ENCODE measurements at regions of chr10 and their contacts with region 1.

Region 1: DNA sequence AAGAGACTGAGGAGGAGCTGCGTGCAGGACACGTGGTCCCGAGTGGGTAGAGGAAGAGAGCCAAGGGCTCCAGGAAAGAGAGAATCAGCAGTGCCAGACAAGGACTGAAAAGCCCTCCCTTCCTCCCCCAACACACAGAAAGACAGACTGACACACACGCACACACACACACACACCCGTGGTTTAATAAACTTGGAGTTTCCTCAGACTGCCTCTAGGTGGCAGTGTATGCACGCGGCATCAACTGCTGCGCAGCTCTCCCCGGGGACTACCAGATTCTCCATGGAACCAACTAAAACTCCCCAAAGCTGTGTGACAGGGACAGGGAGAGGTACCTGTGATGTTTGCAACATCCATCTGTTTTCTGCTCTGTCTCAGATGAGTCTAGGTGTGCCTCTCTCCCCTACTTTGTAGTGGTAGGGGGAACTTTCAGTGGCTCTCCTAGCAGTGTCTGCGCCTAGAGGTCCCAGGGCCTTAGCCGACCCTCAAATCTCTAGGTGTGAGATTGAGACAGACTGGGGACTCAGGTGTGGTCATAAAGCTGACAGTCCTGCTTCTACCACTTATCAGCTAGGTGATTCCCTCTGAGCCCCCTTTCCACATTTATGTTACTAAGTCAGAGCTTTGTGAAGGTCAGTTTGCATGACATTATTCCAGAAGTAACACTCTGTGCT is 9.3 kb upstream of the TSPAN14 start:
- DNase-seq: peak; percentile 50
- ATAC-seq: peak; percentile 89
- H3K4me3 Mint-ChIP-seq: no peak overlapping the region
- H3K27ac Mint-ChIP-seq: no peak overlapping the region
- H3K4me1 Mint-ChIP-seq: peaks cover 19% of the 10 kb centered on the region
- H3K27me3 Mint-ChIP-seq: no peaks in the 10 kb centered on the region
- CTCF ChIP-seq: no peak

Region 2: DNA sequence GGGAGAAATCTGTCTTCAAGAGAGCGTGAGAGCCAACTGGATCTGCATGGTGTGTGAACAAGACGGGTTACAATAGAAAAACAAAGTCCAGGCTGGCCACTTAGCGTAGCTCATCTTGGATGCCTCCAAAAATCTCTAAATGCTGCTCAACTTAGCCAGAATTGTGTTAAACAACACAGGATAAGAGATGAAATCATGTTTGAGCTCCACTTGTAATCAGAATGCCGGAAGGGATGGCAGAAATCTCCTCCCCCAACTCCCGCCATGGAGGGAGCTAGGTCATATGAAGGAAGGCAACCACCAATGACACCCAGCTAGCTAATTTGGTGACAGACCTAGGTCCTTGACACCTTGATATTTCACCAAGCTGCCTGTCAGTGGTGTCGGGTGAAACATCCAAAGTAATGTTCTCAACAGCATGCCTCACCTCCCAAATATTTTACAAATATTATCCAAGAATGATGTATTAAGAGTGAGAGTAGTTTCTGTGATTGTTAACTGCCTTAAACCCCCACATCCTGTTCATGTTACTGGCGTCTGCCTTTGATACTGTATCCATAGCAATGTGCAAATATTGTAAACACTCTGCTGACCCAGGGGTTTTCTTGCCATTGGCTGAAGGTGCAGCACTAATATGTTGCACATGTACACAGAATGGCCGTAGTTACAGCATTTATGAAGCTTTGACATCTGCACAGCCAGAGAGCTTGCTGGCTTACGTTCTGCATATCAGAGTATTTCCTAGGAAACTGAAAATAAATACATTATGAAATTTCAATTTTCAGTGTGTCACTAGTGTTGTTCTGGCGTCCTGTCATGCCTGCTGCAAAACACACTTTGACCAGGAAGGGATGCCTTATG is 340.5 kb before region 1 on chr10:
- CTCF ChIA-PET with region 1: no interaction called
- POLR2A ChIA-PET with region 1: no interaction called
- DNase-seq: no peak
- ATAC-seq: no peak; the same call in 1 of the 2 replicates
- H3K4me3 Mint-ChIP-seq: no peak overlapping the region
- H3K27ac Mint-ChIP-seq: no peak overlapping the region
- H3K4me1 Mint-ChIP-seq: peaks cover 48% of the 10 kb centered on the region
- H3K27me3 Mint-ChIP-seq: peaks cover 6% of the 10 kb centered on the region
- CTCF ChIP-seq: no peak

Region 3: DNA sequence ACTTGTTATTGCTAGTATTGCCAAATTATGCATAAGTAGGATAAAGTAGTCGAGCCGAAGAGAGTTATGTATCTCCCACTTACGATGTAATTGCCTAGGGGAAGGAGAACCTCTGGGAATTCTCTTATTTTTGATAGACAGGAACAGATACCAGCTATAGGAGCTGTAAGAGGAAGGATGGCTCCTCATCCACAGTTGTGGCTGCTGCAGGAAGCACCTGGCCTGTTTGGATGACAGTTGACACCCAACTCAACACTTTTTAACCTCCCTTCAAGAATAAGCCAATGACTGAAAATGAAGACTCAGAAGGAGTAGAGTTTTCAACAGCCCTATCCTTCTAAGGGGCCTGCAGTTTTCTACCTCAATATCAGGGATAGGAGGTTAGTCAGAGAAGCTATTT is 94.5 kb before region 1 on chr10:
- CTCF ChIA-PET with region 1: no interaction called
- POLR2A ChIA-PET with region 1: no interaction called
- DNase-seq: no peak
- ATAC-seq: no peak
- H3K4me3 Mint-ChIP-seq: no peak overlapping the region
- H3K27ac Mint-ChIP-seq: no peak overlapping the region
- H3K4me1 Mint-ChIP-seq: peaks cover 16% of the 10 kb centered on the region
- H3K27me3 Mint-ChIP-seq: peaks cover 16% of the 10 kb centered on the region
- CTCF ChIP-seq: no peak

Region 4: GRCh38 chr10:80371460-80371859 is 73.3 kb before region 1 on chr10:
- CTCF ChIA-PET with region 1: no interaction called
- POLR2A ChIA-PET with region 1: no interaction called
- DNase-seq: no peak
- ATAC-seq: peak; percentile 66
- H3K4me3 Mint-ChIP-seq: no peak overlapping the region
- H3K27ac Mint-ChIP-seq: no peak overlapping the region
- H3K4me1 Mint-ChIP-seq: no peaks in the 10 kb centered on the region
- H3K27me3 Mint-ChIP-seq: peaks cover 3% of the 10 kb centered on the region; the same call in 1 of the 2 replicates
- CTCF ChIP-seq: no peak

Region 5: DNA sequence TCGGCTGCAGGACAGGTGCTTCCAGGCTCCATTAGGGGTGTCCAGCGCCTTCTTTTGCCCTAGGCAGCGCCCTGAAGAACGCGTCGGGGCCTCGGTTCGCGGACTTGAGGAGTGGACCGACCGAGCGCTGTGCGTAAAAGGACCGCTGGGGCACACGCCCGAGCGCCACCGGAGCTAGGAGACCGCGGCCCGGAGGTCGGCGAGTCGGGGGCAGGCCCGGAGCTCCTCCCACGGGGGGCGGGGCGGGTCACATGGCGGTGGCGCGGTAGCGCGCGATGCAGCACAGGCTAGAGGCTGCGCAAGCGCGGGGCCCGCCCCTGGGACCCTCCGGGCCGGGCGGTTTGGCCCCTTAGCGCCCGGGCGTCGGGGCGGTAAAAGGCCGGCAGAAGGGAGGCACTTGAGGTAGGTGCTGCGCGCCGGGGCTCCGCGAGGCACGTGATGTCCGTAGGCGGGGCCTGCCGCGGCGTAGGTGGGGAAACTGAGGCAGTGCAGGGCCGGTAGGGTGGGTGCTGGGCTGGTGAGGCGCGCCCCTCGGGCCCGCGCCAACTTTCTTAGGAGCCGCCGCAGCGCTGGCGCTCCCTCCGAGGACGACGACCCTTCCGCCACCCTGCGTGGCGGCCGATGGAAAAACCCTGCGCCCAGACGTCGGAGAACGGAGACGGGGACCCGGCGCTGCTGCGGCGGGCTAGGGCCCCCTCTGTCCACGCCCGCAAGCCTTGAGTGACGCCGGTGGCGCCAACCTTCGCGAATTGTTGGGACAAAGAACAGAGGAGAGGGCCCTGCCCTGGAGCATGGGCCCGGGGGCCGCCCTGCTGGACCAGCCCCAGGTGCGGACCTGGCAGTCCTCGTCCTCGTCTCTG is 36.3 kb before region 1 on chr10 and contains the start of gene PRXL2A:
- CTCF ChIA-PET with region 1: interaction called, 25 read pairs
- POLR2A ChIA-PET with region 1: interaction called, 4 read pairs
- DNase-seq: peak; percentile 94
- ATAC-seq: peak; percentile 95
- H3K4me3 Mint-ChIP-seq: peak within 1 kb of the TSS; percentile 88
- H3K27ac Mint-ChIP-seq: peak within 1 kb of the TSS; percentile 60
- H3K4me1 Mint-ChIP-seq: peaks cover 44% of the 10 kb centered on the region
- H3K27me3 Mint-ChIP-seq: peaks cover 26% of the 10 kb centered on the region
- CTCF ChIP-seq: no peak
- total RNA-seq, gene PRXL2A: 46.6 to 56.5 TPM (median 52.4 TPM) in 3 replicates

Region 6: GRCh38 chr10:80459047-80459931 is 14.5 kb after region 1 on chr10:
- CTCF ChIA-PET with region 1: interaction called, 32 read pairs
- POLR2A ChIA-PET with region 1: interaction called, 5 read pairs
- DNase-seq: peak; percentile 30
- ATAC-seq: peak; percentile 7
- H3K4me3 Mint-ChIP-seq: peak overlapping the region; percentile 50
- H3K27ac Mint-ChIP-seq: peak overlapping the region; percentile 99
- H3K4me1 Mint-ChIP-seq: peaks cover 81% of the 10 kb centered on the region
- H3K27me3 Mint-ChIP-seq: no peaks in the 10 kb centered on the region
- CTCF ChIP-seq: no peak

Region 7: GRCh38 chr10:80498833-80499741 is 54.3 kb after region 1 on chr10:
- CTCF ChIA-PET with region 1: interaction called, 802 read pairs
- POLR2A ChIA-PET with region 1: interaction called, 4 read pairs
- DNase-seq: no peak
- ATAC-seq: peak; percentile 46; the same call in 1 of the 2 replicates
- H3K4me3 Mint-ChIP-seq: no peak overlapping the region
- H3K27ac Mint-ChIP-seq: peak overlapping the region; percentile 23; the same call in 1 of the 2 replicates
- H3K4me1 Mint-ChIP-seq: peaks cover 64% of the 10 kb centered on the region
- H3K27me3 Mint-ChIP-seq: no peaks in the 10 kb centered on the region
- CTCF ChIP-seq: no peak